ENCODE measurements at regions of chr1 and their contacts with region 1.

Region 1: GRCh38 chr1:86499987-86500593 is 31.4 kb downstream of the CLCA1 start:
- DNase-seq: no peak
- H3K4me3 Mint-ChIP-seq: no peak overlapping the region
- H3K27ac Mint-ChIP-seq: no peak overlapping the region
- H3K4me1 Mint-ChIP-seq: peaks cover 16% of the 10 kb centered on the region
- H3K27me3 Mint-ChIP-seq: peaks cover 37% of the 10 kb centered on the region

Region 2: GRCh38 chr1:86380257-86380861 is 119.7 kb before region 1 on chr1:
- CTCF ChIA-PET with region 1: interaction called, 51 read pairs
- DNase-seq: no peak
- H3K4me3 Mint-ChIP-seq: no peak overlapping the region
- H3K27ac Mint-ChIP-seq: no peak overlapping the region
- H3K4me1 Mint-ChIP-seq: peaks cover 16% of the 10 kb centered on the region
- H3K27me3 Mint-ChIP-seq: no peaks in the 10 kb centered on the region

Region 3: DNA sequence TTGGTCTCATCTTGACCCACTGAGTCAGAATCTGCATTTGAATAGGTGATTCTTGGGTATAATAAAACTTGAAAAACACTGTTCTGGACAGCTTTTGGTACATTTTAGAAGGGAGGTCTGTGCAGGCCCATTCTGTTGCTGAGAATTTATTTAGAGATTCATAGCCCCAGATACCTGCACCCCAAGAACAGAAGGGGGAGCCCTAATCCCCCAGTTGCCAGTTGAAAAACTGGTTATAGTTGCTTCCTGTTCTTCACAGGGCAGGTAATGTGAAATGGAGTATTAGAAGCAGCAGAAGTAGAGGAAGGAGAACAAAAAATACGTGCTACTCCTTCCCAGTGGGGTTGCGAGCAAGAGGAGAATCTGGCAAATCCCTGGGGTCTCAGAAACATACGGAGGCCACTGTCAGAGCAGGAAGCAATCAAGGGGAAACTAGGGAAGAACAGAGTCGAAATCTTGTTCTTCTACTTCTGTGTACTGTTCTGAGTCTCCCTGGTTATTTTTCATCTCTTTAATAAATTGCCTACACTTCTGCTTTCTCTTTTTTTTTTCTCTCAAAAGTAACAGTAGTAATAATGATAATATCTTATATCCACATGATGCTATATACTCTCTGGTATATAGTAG is 80.7 kb before region 1 on chr1:
- CTCF ChIA-PET with region 1: interaction called, 30 read pairs
- DNase-seq: peak; percentile 71
- H3K4me3 Mint-ChIP-seq: no peak overlapping the region
- H3K27ac Mint-ChIP-seq: no peak overlapping the region
- H3K4me1 Mint-ChIP-seq: peaks cover 2% of the 10 kb centered on the region
- H3K27me3 Mint-ChIP-seq: peaks cover 15% of the 10 kb centered on the region

Region 4: DNA sequence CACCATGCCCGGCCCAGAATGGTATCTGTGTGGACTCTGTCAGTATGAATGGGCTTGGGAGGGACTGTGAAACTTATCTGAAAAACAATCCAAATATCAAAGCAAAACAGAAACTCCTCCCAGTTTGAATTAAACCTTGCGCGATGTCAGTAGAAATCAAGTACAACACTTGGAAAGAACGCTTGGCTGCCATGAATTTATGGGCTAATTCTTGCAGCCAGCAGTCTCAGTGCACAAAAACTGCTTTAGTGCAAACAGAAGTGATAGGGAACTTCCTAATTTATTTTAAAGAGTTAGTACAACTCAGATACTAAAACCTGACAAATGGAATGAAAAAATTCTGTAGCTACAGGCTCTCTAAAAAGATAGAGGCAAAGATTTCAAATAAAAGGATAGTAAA is 22.8 kb before region 1 on chr1:
- CTCF ChIA-PET with region 1: interaction called, 30 read pairs
- DNase-seq: no peak
- H3K4me3 Mint-ChIP-seq: no peak overlapping the region
- H3K27ac Mint-ChIP-seq: no peak overlapping the region
- H3K4me1 Mint-ChIP-seq: no peaks in the 10 kb centered on the region
- H3K27me3 Mint-ChIP-seq: peaks cover 4% of the 10 kb centered on the region

Region 5: GRCh38 chr1:86640161-86640670 is 140.1 kb after region 1 on chr1:
- CTCF ChIA-PET with region 1: no interaction called
- DNase-seq: no peak
- H3K4me3 Mint-ChIP-seq: no peak overlapping the region
- H3K27ac Mint-ChIP-seq: no peak overlapping the region
- H3K4me1 Mint-ChIP-seq: no peaks in the 10 kb centered on the region
- H3K27me3 Mint-ChIP-seq: no peaks in the 10 kb centered on the region

Measured in activated naive CD4-positive, alpha-beta T cell treated with anti-CD3 and anti-CD28 coated beads, Interleukin-2, amount 10 ng/mL, durations not matched to agents 7 days and 5 days (primary cell).